Activated naive CD4-positive, alpha-beta T cell treated with anti-CD3 and anti-CD28 coated beads for 36 hours (primary cell): ENCODE measurements at regions of chr9 and their contacts with region 1.

Region 1: DNA sequence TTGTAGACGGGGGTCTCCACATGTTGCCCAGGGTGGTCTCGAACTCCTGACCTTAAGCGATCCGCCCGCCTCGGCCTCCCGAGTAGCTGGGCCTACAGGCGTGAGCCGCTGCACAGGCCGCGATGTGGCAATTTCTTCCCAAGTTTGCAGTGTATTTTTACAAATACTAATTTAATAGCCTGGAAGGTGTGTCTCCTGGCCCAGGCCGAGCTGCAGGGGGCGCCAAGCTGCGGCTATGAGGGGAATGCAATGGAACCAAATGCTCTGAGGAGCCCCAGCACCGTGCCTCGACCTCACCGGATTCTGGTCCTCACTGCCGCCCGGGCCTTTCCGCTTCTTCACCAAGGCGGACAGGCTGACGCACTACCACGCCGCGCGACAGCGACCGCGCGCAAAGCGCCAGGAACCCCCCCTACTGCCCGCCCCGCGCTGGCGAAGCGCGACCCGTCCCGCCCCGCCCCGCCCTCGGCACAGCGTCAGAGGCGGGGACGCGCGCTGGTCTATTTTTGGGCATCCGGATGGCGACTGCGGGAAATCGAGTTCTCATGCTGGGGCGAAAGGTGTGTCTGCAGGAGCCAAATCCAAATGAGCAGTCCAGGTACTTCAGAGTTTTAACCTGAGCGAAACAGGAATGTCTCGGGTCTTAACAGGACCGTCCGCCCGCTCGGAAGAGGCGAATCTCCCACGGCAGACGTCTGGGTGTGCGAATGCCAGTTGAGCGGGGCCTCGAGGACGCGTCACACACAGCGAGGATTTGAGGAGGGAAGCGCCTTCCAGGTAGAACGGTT is 31.6 kb upstream of the PRXL2C start:
- DNase-seq: peak; percentile 85
- H3K4me3 Mint-ChIP-seq: peak overlapping the region; percentile 85
- H3K27ac Mint-ChIP-seq: peak overlapping the region; percentile 72
- H3K4me1 Mint-ChIP-seq: peaks cover 3% of the 10 kb centered on the region
- H3K27me3 Mint-ChIP-seq: peaks cover 3% of the 10 kb centered on the region

Region 2: GRCh38 chr9:96777426-96777864 is 90.7 kb after region 1 on chr9:
- CTCF ChIA-PET with region 1: no interaction called
- intact Hi-C with region 1: loop called (anchors 1 kb)
- DNase-seq: no peak
- H3K4me3 Mint-ChIP-seq: peak overlapping the region; percentile 100
- H3K27ac Mint-ChIP-seq: peak overlapping the region; percentile 96
- H3K4me1 Mint-ChIP-seq: peaks cover 32% of the 10 kb centered on the region
- H3K27me3 Mint-ChIP-seq: no peaks in the 10 kb centered on the region